Activated T-helper 2 cell treated with anti-CD3 and anti-CD28 coated beads, Interferon-gamma antibody, Interleukin-2, Interleukin-4, amounts not matched to agents 10 μg/mL and 5 μg/mL and 100 μg/mL, durations not matched to agents 14 hours and 24 hours and 36 hours (primary cell): ENCODE measurements at regions of chr2 and their contacts with region 1.

Region 1: GRCh38 chr2:3728104-3729054 is 25.0 kb downstream of the DCDC2C start:
- DNase-seq: no peak
- H3K4me3 Mint-ChIP-seq: no peak overlapping the region
- H3K27ac Mint-ChIP-seq: no peak overlapping the region
- H3K4me1 Mint-ChIP-seq: no peaks in the 10 kb centered on the region
- H3K27me3 Mint-ChIP-seq: no peaks in the 10 kb centered on the region

Region 2: GRCh38 chr2:3154700-3155099 is 573.7 kb before region 1 on chr2:
- intact Hi-C with region 1: no loop called
- DNase-seq: no peak
- H3K4me3 Mint-ChIP-seq: no peak overlapping the region
- H3K27ac Mint-ChIP-seq: no peak overlapping the region
- H3K4me1 Mint-ChIP-seq: peaks cover 3% of the 10 kb centered on the region
- H3K27me3 Mint-ChIP-seq: no peaks in the 10 kb centered on the region

Region 3: DNA sequence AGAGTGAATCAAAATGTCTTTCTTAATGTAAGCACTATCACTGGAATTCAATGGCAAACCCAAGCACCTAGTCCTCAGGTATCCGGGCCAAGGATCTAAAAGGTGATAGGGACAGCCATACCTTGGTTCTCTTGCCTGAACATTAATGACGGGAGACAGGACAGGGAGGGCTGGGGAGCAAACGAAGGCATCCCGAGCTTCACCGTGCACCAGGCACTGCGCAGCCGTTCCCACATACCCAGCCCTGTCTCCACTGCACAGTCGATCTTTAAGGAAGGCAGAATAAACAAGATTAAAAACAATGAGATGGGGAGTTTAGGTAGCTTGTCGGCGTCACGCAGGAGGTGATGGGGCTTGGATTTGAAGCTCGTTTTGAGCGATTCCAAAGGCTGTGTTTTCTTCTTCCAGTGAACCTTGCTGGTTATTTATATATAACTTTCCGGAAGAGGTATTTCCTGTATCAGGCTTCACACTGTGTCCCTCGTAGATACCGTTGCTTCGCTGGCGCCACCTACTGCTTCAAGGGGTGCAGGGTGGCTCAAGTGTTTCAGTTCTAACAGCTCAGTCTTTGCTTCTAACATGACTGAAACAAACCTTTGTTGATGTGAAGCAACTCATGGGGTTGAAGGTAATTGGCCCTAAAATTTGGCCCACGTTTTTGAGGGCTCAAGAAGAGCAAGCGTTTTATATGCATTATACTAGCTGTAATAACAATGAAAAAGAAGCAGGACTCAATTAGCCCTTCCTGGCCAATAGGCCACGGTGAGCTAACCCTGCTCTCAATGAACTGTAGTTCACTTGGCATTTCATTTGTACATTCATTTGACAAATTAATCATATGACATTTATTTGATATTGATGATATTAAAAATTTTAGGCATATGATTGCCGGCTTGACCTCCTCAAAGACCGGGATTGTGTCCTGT is 52.4 kb after region 1 on chr2:
- intact Hi-C with region 1: loop called (anchors 1 kb)
- DNase-seq: peak; percentile 59
- H3K4me3 Mint-ChIP-seq: peak overlapping the region; percentile 48
- H3K27ac Mint-ChIP-seq: peak overlapping the region; percentile 71
- H3K4me1 Mint-ChIP-seq: peaks cover 6% of the 10 kb centered on the region
- H3K27me3 Mint-ChIP-seq: peaks cover 9% of the 10 kb centered on the region